ENCODE measurements at regions of chr3 and their contacts with region 1.

Region 1: DNA sequence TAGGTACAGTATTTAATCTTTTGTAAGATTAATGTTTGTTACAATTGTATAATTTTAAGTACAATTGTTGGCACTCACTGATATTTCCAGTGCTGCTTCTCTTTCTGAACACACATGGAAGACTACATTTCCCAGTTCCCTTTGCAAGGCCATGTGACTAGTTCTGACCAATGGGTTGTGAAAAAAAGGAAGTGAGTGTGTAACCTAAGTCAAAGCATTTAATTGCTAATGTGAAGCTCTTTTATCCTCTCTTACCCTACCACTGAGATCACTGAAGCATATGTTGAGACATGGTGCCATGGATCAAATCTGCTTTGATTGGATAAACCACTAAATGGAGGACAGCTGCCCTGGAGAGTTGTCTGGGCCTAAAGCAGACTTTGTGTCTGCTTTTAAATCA is 83.9 kb upstream of the PLXND1 start:
- DNase-seq: peak; percentile 18
- H3K4me3 ChIP-seq: no peak overlapping the region
- H3K27ac ChIP-seq: no peak overlapping the region
- H3K4me1 ChIP-seq: no peaks in the 10 kb centered on the region
- H3K27me3 ChIP-seq: no peaks in the 10 kb centered on the region
- CTCF ChIP-seq: no peak
- POLR2A ChIP-seq: no peak

Region 2: DNA sequence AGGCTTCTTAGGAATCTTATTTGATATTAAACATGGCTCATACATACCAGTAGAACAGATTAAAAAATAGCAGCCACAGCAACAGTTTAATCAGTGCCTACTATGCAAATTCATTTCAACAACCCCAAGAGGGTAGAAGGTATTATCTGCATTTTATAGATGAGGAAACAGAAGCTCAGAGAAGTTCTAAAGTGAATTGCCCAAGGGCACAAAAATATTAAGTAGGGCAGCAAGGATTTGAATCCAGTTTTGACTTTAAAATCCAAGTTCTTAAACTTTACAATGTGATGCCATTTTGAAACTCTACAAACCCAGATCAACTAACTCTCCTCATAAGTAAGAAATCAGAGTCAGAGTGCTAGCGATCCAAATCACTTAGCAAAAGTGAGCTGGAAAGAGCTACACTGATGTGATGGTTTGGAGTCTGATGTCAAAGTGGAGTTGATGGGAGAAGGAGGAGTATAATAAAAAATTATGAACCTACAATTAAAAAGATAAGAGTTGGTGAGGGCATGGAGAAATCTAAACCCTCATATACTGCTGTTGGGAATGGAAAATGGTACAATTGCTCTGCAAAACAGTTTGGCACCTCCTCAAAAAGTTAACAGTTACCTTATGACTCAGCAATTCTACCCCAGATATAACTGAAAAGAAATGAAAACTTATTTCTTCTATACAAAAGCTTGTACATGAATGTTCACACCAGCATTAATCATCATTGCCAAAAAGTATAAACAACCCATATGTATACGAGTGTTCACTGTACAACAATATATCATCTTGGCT is 33.0 kb before region 1 on chr3:
- intact Hi-C with region 1: loop called (anchors 1 kb)
- DNase-seq: no peak
- H3K4me3 ChIP-seq: no peak overlapping the region
- H3K27ac ChIP-seq: no peak overlapping the region
- H3K4me1 ChIP-seq: no peaks in the 10 kb centered on the region
- H3K27me3 ChIP-seq: no peaks in the 10 kb centered on the region
- CTCF ChIP-seq: no peak
- POLR2A ChIP-seq: no peak